ENCODE measurements at regions of chr9 and their contacts with region 1.

Region 1: GRCh38 chr9:14347406-14348122 is 33.6 kb upstream of the NFIB start:
- DNase-seq: peak in 1 of 2 experiments; percentile 81
- H3K4me3 ChIP-seq: peak overlapping the region; percentile 60 to 70 (median 64)
- H3K27ac ChIP-seq: no peak overlapping the region
- H3K4me1 ChIP-seq: peaks cover 15 to 34% (median 19%) of the 10 kb centered on the region in 4 experiments
- H3K27me3 ChIP-seq: peaks cover 28 to 76% (median 64%) of the 10 kb centered on the region in 4 experiments
- CTCF ChIP-seq: no peak
- EP300 ChIP-seq: no peak
- POLR2A ChIP-seq: no peak
- RAD21 ChIP-seq: no peak

Region 2: GRCh38 chr9:14283276-14283675 is 64.3 kb before region 1 on chr9:
- CTCF ChIA-PET with region 1: no interaction called
- POLR2A ChIA-PET with region 1: no interaction called
- DNase-seq: no peak
- H3K4me3 ChIP-seq: no peak overlapping the region
- H3K27ac ChIP-seq: no peak overlapping the region
- H3K4me1 ChIP-seq: peaks cover 0 to 2% (median 0%) of the 10 kb centered on the region in 4 experiments; a peak in 2 of 7 replicates
- H3K27me3 ChIP-seq: no peaks in the 10 kb centered on the region
- CTCF ChIP-seq: no peak
- EP300 ChIP-seq: no peak
- POLR2A ChIP-seq: no peak
- RAD21 ChIP-seq: no peak

Region 3: GRCh38 chr9:14314929-14315645 is 32.5 kb before region 1 on chr9:
- CTCF ChIA-PET with region 1: interaction called, 18 read pairs
- POLR2A ChIA-PET with region 1: interaction called, 26 read pairs
- DNase-seq: peak in 1 of 2 experiments; percentile 84
- H3K4me3 ChIP-seq: peak overlapping the region; percentile 62 to 85 (median 72)
- H3K27ac ChIP-seq: peak overlapping the region; percentile 81; the same call in 1 of the 2 replicates
- H3K4me1 ChIP-seq: peaks cover 9 to 23% (median 14%) of the 10 kb centered on the region in 4 experiments; a peak in 6 of 7 replicates
- H3K27me3 ChIP-seq: peaks cover 0 to 8% (median 0%) of the 10 kb centered on the region in 4 experiments; a peak in 3 of 7 replicates
- CTCF ChIP-seq: no peak
- EP300 ChIP-seq: no peak
- POLR2A ChIP-seq: peak in 1 of 2 experiments; percentile 51; a peak in 2 of 3 replicates
- RAD21 ChIP-seq: no peak

Region 4: DNA sequence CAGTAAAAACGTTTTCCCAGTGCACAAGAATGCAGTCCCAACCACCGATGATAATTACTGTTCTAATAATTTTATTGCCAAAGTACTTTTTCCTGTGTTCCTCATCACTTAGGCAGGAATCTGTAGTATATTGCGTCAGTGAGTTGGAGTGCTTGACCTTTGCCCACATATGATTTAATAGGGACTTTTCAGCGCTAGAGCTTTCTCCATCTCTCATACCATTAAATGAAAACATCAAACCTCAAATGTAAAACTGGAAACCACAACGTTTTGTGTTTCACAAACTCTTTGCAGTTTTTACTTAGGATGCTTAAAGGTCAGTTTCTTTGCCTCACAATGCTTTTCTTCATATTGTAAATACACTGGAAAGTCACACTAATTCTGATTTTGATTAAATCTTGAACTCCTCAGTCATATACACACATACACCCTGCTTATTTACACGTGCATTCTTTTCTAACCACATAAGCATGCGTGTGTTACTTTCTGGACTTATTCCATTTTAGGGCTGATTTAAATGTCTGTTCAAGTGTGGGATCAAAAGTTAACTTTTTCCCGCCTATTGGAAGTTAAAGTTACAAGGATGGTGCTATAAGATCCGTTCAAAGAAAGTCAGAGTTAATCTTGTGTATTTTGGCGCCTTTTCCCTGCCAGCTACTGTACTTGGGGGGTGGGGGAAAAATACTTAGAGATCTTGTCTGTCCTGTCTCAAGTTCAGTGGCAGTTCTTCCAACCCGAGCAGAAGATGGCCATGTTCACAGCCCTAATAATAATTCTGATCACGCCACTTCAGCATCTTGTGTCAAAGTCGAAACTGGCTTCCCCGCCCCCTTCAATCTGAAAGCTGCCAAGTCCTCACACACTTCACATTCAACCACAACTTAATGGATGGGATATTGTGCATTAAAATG is 27.0 kb before region 1 on chr9:
- CTCF ChIA-PET with region 1: interaction called, 18 read pairs
- POLR2A ChIA-PET with region 1: interaction called, 26 read pairs
- DNase-seq: no peak
- H3K4me3 ChIP-seq: peak overlapping the region; percentile 17 to 84 (median 32); a peak in 5 of 8 replicates
- H3K27ac ChIP-seq: no peak overlapping the region
- H3K4me1 ChIP-seq: peaks cover 16 to 36% (median 20%) of the 10 kb centered on the region in 4 experiments
- H3K27me3 ChIP-seq: peaks cover 0 to 6% (median 2%) of the 10 kb centered on the region in 4 experiments; a peak in 2 of 7 replicates
- CTCF ChIP-seq: no peak
- EP300 ChIP-seq: no peak
- POLR2A ChIP-seq: no peak
- RAD21 ChIP-seq: no peak

Measured in H1 (cell line).